CD4-positive, alpha-beta T cell (primary cell): ENCODE measurements at regions of chr12 and their contacts with region 1.

Region 1: GRCh38 chr12:32755654-32756475 is at the start of gene YARS2:
- DNase-seq: peak; percentile 75 to 97 (median 84)
- ATAC-seq: peak; percentile 81
- H3K4me3 ChIP-seq: peak within 1 kb of the TSS; percentile 90
- H3K4me3 Mint-ChIP-seq: peak within 1 kb of the TSS; percentile 91
- H3K27ac ChIP-seq: peak within 1 kb of the TSS; percentile 69 to 88
- H3K27ac Mint-ChIP-seq: peak within 1 kb of the TSS; percentile 89
- H3K4me1 ChIP-seq: peaks cover 20% of the 10 kb centered on the region
- H3K4me1 Mint-ChIP-seq: peaks cover 22% of the 10 kb centered on the region
- H3K27me3 ChIP-seq: no peaks in the 10 kb centered on the region
- H3K27me3 Mint-ChIP-seq: no peaks in the 10 kb centered on the region
- CTCF ChIP-seq: peak; percentile 92
- total RNA-seq, gene YARS2: 12.0 to 13.0 TPM

Region 2: DNA sequence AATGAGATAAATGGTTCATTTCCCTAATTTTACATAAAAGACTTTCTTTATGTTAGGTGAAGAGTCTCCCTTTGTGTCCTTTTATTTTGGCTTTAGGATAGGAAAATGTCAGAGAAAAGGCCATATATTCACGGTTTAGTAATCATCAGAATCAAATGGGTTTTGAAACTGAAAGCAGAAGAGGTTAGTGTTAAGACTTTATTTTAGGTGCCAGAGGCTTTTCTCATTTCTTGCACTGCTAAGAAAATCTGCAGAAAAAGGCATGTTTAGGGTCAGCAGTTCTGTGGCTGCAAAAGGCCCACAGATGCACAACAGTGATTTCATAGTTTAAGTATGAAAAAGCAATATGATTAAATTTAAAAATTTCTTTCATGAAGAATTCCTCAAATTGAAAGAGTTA is 1349.5 kb before region 1 on chr12:
- CTCF ChIA-PET with region 1: interaction called, 10 read pairs
- POLR2A ChIA-PET with region 1: no interaction called
- intact Hi-C with region 1: no loop called
- DNase-seq: no peak
- ATAC-seq: no peak
- H3K4me3 ChIP-seq: no peak overlapping the region
- H3K4me3 Mint-ChIP-seq: no peak overlapping the region
- H3K27ac ChIP-seq: no peak overlapping the region
- H3K27ac Mint-ChIP-seq: no peak overlapping the region
- H3K4me1 ChIP-seq: no peaks in the 10 kb centered on the region
- H3K4me1 Mint-ChIP-seq: no peaks in the 10 kb centered on the region
- H3K27me3 ChIP-seq: no peaks in the 10 kb centered on the region
- H3K27me3 Mint-ChIP-seq: peaks cover 7% of the 10 kb centered on the region
- CTCF ChIP-seq: no peak

Region 3: DNA sequence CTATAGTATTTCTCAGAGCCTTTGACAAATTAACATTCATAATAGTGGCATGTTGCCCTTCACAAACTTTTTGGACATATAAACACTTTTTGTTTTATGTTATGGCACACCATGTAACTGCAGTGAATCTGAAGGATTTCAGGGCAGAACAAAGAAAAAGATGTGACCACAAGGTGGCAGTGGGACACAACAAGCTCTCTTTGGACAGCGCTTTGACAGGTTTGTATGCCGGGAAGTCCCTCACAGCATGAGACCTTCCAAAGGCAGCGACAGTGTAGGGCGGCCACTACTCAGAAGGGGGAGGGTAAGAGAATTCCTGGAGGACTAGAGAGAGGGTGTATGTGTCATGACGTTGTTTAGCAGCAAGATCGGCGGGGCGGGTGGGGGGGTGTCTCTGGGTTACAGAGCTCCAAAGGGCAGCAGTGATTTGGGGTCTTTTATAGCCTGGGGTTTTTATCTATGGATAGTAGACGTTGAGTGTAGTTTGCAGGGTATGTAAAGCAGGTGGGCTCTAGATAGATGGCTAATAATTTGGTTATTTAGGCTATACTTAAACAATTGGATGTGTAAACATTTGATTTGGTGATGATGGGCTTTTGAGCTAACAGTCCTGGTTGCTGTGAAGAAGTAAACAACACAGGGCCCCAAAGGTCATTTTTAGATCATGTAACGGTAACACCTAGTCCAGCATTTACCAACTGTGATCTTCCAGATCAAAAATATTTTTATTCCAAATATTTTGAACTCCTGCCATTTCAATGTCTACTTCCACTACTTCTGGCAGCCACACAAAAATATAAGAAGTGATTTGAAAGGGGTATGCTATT is 1073.5 kb before region 1 on chr12:
- CTCF ChIA-PET with region 1: no interaction called
- POLR2A ChIA-PET with region 1: no interaction called
- intact Hi-C with region 1: loop called in 1 of 2 experiments (anchors 10 kb)
- DNase-seq: peak; percentile 42 to 89 (median 58)
- ATAC-seq: peak; percentile 92
- H3K4me3 ChIP-seq: no peak overlapping the region
- H3K4me3 Mint-ChIP-seq: peak overlapping the region; percentile 22
- H3K27ac ChIP-seq: no peak overlapping the region
- H3K27ac Mint-ChIP-seq: peak overlapping the region; percentile 31
- H3K4me1 ChIP-seq: no peaks in the 10 kb centered on the region
- H3K4me1 Mint-ChIP-seq: peaks cover 11% of the 10 kb centered on the region
- H3K27me3 ChIP-seq: no peaks in the 10 kb centered on the region
- H3K27me3 Mint-ChIP-seq: no peaks in the 10 kb centered on the region
- CTCF ChIP-seq: peak; percentile 78

Region 4: DNA sequence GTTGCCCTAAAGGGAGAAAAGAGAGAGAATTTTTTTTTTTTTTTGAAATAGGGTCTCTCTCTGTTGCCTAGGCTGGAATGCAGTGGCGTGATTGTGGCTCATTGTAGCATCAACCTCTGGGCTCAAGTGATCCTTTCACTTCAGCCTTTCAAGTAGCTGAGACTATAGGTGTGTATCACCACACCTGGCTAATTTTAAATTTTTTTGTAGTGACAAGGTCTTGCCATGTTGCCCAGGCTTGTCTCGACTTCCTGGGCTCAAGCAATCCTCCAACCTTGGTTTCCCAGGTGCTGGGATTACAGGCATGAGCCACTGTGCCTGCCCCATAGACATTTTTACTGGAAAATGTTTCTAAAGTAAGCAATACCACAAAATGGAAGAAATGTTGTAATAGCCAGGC is 36.9 kb before region 1 on chr12:
- CTCF ChIA-PET with region 1: no interaction called
- POLR2A ChIA-PET with region 1: no interaction called
- intact Hi-C with region 1: no loop called
- DNase-seq: no peak
- ATAC-seq: no peak
- H3K4me3 ChIP-seq: no peak overlapping the region
- H3K4me3 Mint-ChIP-seq: no peak overlapping the region
- H3K27ac ChIP-seq: no peak overlapping the region
- H3K27ac Mint-ChIP-seq: no peak overlapping the region
- H3K4me1 ChIP-seq: no peaks in the 10 kb centered on the region
- H3K4me1 Mint-ChIP-seq: no peaks in the 10 kb centered on the region
- H3K27me3 ChIP-seq: no peaks in the 10 kb centered on the region
- H3K27me3 Mint-ChIP-seq: no peaks in the 10 kb centered on the region
- CTCF ChIP-seq: no peak

Region 5: GRCh38 chr12:32739279-32739678 is 16.6 kb before region 1 on chr12:
- CTCF ChIA-PET with region 1: interaction called, 12 read pairs
- POLR2A ChIA-PET with region 1: interaction called, 11 read pairs
- intact Hi-C with region 1: no loop called
- DNase-seq: no peak
- ATAC-seq: no peak
- H3K4me3 ChIP-seq: no peak overlapping the region
- H3K4me3 Mint-ChIP-seq: no peak overlapping the region
- H3K27ac ChIP-seq: no peak overlapping the region
- H3K27ac Mint-ChIP-seq: no peak overlapping the region
- H3K4me1 ChIP-seq: no peaks in the 10 kb centered on the region
- H3K4me1 Mint-ChIP-seq: peaks cover 16% of the 10 kb centered on the region
- H3K27me3 ChIP-seq: no peaks in the 10 kb centered on the region
- H3K27me3 Mint-ChIP-seq: no peaks in the 10 kb centered on the region
- CTCF ChIP-seq: no peak

Region 6: DNA sequence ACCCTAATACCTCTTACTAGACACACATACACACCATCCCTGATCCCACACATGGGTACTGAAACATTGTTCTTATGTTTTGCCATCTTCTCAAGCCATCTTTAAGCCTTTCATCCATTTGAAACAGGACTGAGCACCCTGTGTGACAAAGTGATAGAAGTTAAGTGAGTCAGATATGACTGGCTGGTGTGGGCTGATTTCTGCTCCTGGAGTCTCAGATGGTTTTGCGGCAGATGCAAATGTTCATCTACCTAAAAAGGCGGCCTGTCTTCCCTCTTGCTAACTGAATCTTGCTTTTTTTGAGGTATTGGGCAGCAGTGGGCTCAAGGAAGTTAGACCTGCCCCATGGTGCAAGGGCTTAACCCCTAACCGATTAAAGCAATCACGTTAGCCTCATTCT is 171.1 kb after region 1 on chr12:
- CTCF ChIA-PET with region 1: no interaction called
- POLR2A ChIA-PET with region 1: no interaction called
- intact Hi-C with region 1: no loop called
- DNase-seq: no peak
- ATAC-seq: no peak
- H3K4me3 ChIP-seq: no peak overlapping the region
- H3K4me3 Mint-ChIP-seq: no peak overlapping the region
- H3K27ac ChIP-seq: no peak overlapping the region
- H3K27ac Mint-ChIP-seq: no peak overlapping the region
- H3K4me1 ChIP-seq: no peaks in the 10 kb centered on the region
- H3K4me1 Mint-ChIP-seq: no peaks in the 10 kb centered on the region
- H3K27me3 ChIP-seq: no peaks in the 10 kb centered on the region
- H3K27me3 Mint-ChIP-seq: peaks cover 14% of the 10 kb centered on the region
- CTCF ChIP-seq: no peak

Region 7: DNA sequence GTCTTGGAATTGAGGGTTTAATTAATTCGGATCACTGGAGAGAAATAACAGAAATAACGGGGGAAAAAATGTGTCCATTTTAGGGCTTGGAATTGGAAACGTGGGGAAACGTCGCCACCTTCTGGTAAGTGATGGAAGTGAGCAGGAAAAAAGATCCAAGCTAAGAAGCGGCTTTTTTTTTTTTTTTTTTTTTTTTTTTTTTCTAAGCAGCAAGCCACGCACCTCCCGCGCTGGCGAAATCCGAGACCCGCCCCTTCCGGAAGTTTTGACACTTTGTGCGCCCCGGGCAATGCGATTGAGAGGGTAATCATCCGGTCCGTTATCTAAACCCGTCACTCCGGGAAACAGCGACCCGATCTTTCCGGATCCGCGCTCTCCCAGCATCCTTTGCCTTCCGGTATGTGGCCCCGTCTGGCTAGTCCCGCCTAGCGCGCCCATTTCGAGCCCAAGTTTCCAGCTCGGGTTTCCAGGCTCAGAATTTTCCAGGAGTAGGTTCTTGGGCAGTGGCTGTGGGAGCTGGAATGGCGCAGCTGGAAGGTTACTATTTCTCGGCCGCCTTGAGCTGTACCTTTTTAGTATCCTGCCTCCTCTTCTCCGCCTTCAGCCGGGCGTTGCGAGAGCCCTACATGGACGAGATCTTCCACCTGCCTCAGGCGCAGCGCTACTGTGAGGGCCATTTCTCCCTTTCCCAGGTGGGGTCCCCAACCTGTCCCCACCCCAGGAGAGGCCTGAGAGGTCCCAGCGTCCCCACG is 1266.4 kb after region 1 on chr12 and contains the start of gene ALG10:
- CTCF ChIA-PET with region 1: interaction called, 13 read pairs
- POLR2A ChIA-PET with region 1: interaction called, 71 read pairs
- intact Hi-C with region 1: loop called (anchors 1 to 2 kb)
- DNase-seq: peak; percentile 91 to 98 (median 95)
- ATAC-seq: peak; percentile 96
- H3K4me3 ChIP-seq: peak within 1 kb of the TSS; percentile 93
- H3K4me3 Mint-ChIP-seq: peak within 1 kb of the TSS; percentile 96
- H3K27ac ChIP-seq: peak within 1 kb of the TSS; percentile 88 to 94
- H3K27ac Mint-ChIP-seq: peak within 1 kb of the TSS; percentile 99
- H3K4me1 ChIP-seq: peaks cover 6% of the 10 kb centered on the region
- H3K4me1 Mint-ChIP-seq: peaks cover 40% of the 10 kb centered on the region
- H3K27me3 ChIP-seq: no peaks in the 10 kb centered on the region
- H3K27me3 Mint-ChIP-seq: no peaks in the 10 kb centered on the region
- CTCF ChIP-seq: peak; percentile 76
- total RNA-seq, gene ALG10: 9.0 to 10.7 TPM